Posterior vena cava (tissue), 2 donors: ENCODE measurements at regions of chr5 and their contacts with region 1.

Region 1: GRCh38 chr5:43560128-43560527 is 3.3 kb upstream of the PAIP1 start:
- DNase-seq: no peak

Region 2: DNA sequence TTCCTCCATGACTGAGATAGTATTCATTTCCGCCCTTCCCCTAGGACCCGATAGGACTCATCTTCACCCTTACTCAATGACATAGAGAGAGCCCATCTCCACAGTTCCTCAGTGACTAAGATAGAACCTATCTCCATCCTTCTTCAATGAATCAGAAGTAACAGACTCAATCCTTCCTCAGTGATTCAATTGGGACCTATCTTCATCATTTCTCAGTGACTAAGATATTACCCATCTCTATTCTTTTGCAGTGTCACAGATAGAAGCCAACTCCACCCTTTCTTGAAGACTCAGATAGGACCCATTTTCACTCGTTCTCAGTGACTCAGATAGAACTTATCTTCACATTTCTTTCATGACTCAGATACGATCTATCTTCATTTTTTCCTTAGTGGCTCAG is 1470.4 kb before region 1 on chr5:
- intact Hi-C with region 1: no loop called
- DNase-seq: no peak

Region 3: GRCh38 chr5:43602461-43603343 is 42.6 kb after region 1 on chr5 and contains the start of gene NNT:
- intact Hi-C with region 1: loop called in 1 of 2 experiments (anchors 5 kb)
- DNase-seq: peak; percentile 93
- total RNA-seq, gene NNT: 62.4 to 65.1 TPM

Region 4: DNA sequence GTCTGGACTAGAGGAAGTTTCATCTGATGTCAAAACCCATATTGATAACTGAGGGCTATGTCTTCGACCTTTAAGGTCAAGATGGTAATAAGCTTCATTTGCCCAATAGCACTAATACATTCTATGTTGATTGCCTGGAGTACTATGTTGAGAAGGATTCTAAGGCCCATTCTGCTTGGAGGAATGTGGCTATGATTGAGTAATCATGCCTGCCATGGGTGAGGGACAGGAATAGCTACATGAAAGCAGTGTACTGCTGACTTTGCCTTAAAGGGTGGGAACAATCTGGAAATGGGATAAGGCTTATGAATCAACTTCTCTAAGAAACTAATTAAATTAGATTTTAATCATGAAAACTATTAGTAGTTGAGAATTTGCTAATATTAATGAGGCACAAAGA is 56.4 kb after region 1 on chr5:
- intact Hi-C with region 1: no loop called
- DNase-seq: no peak

Region 5: GRCh38 chr5:45262046-45262590 is 1702.0 kb after region 1 on chr5:
- intact Hi-C with region 1: loop called in 1 of 2 experiments (anchors 10 kb)
- DNase-seq: peak; percentile 68